ENCODE measurements at regions of chr1 and their contacts with region 1.

Region 1: DNA sequence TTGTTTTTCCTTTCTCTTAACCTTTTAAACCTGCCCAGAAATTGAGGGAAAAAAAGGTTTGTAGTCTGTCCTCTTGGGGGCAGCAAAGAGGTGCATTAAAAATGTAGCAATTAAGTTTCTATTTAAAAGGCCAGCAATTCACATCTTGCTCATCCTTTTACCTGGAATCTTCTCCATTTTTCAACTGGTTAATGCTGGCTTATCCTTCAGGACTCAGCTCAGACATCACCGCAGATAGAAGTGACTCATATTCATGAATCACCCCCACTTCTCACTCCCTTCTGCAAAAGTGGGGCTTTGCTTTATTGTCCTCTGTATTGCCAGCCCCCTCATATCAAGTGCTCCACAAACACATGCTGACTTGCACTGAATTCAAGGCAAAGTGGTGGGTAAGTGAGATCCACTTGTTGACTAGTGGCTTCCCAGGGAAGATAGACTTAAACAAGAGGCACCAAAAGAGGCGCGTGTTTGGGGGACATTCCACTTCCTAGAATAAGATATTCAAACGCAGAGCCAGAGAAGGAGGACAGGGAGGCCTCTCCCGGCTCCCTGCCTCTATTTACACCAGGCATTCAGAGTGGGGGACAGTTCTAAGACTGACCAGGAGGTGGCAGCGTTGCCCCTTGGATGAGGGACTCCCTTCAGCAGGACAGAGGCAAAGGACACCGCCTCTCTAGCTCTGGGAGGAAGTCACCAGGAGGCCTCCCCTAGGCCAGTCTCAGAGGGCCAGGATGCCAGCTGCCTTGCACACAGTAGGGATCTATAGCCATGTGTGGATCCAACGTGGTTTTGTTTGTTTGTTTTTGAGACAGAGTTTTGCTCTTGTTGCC is 23.2 kb upstream of the ZNF648 start:
- DNase-seq: peak; percentile 91
- H3K4me3 Mint-ChIP-seq: no peak overlapping the region
- H3K27ac Mint-ChIP-seq: peak overlapping the region; percentile 10
- H3K4me1 Mint-ChIP-seq: peaks cover 42% of the 10 kb centered on the region
- H3K27me3 Mint-ChIP-seq: no peaks in the 10 kb centered on the region

Region 2: GRCh38 chr1:181397845-181398244 is 686.9 kb before region 1 on chr1:
- CTCF ChIA-PET with region 1: no interaction called
- POLR2A ChIA-PET with region 1: no interaction called
- intact Hi-C with region 1: loop called (anchors 5 kb)
- DNase-seq: peak; percentile 39
- H3K4me3 Mint-ChIP-seq: no peak overlapping the region
- H3K27ac Mint-ChIP-seq: peak overlapping the region; percentile 53
- H3K4me1 Mint-ChIP-seq: peaks cover 38% of the 10 kb centered on the region
- H3K27me3 Mint-ChIP-seq: no peaks in the 10 kb centered on the region

Region 3: GRCh38 chr1:182054698-182055326 is 29.9 kb before region 1 on chr1:
- CTCF ChIA-PET with region 1: interaction called, 14 read pairs
- POLR2A ChIA-PET with region 1: no interaction called
- intact Hi-C with region 1: no loop called
- DNase-seq: peak; percentile 50
- H3K4me3 Mint-ChIP-seq: no peak overlapping the region
- H3K27ac Mint-ChIP-seq: no peak overlapping the region
- H3K4me1 Mint-ChIP-seq: peaks cover 3% of the 10 kb centered on the region
- H3K27me3 Mint-ChIP-seq: peaks cover 19% of the 10 kb centered on the region

Region 4: DNA sequence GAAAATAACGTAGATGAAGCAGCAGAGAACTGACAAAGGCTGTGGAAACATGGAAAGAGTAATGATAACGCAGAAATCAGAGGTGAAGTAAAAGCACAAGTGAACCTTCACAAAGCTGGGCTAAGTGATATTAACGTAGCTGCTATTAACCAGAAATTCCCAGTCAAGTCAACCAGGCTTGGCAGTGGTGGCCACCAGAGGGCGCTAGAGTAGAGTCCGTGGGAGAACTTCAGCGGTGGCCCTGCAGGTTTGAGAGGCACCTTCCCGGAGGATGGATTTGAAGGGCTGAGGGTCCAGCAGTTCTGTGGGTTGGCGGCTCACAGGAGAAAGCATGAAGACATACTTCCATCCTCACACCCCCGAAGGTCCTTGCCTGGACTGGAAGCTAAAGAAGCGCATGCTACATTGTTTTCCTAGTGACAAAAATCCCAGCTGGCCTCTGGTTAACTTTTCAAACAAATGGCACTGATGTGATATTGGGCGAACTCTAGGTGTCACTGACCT is 58.5 kb after region 1 on chr1:
- CTCF ChIA-PET with region 1: interaction called, 67 read pairs
- POLR2A ChIA-PET with region 1: no interaction called
- intact Hi-C with region 1: loop called (anchors 1 kb)
- DNase-seq: peak; percentile 91
- H3K4me3 Mint-ChIP-seq: no peak overlapping the region
- H3K27ac Mint-ChIP-seq: no peak overlapping the region
- H3K4me1 Mint-ChIP-seq: peaks cover 6% of the 10 kb centered on the region
- H3K27me3 Mint-ChIP-seq: peaks cover 4% of the 10 kb centered on the region

Region 5: GRCh38 chr1:182397771-182398393 is 313.2 kb after region 1 on chr1:
- CTCF ChIA-PET with region 1: interaction called, 118 read pairs
- POLR2A ChIA-PET with region 1: no interaction called
- intact Hi-C with region 1: loop called (anchors 1 kb)
- DNase-seq: no peak
- H3K4me3 Mint-ChIP-seq: no peak overlapping the region
- H3K27ac Mint-ChIP-seq: no peak overlapping the region
- H3K4me1 Mint-ChIP-seq: peaks cover 4% of the 10 kb centered on the region
- H3K27me3 Mint-ChIP-seq: no peaks in the 10 kb centered on the region

Region 6: DNA sequence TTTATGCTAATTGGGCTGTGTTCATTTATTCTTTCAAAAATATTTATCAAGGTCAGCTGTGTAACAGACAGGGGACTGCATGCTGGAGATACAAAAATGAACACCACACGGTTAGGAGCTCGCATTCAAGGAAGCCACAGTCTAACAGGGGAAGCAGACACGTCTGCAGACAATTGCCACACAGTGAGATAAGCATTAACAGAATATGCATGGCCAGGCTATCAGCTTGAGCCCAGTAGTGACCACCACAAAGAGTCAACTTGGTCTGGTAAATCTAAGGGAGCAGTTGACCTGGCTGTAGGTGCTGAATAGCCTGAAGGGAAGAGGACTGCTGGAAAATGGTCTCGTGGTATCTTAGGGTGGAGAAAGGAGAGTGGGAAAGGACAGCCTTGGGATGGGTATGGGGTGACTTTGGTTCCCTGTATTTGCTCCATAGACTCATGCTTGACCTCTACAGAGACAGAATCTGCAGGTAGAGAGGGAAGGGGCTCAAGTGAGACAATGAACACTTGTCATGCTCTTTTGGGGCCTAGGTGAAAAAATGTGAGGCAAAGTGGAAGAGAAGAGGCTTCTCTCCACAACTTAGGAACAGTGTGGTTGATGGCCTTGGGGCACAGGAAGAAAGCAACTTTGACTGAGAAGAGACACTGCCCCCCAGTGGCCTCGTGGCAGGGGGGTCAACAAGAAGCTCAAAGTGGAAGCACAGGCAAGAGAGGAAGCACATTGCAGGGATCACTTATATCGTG is 697.3 kb after region 1 on chr1:
- CTCF ChIA-PET with region 1: interaction called, 5 read pairs
- POLR2A ChIA-PET with region 1: no interaction called
- intact Hi-C with region 1: loop called (anchors 2 kb)
- DNase-seq: peak; percentile 85
- H3K4me3 Mint-ChIP-seq: no peak overlapping the region
- H3K27ac Mint-ChIP-seq: no peak overlapping the region
- H3K4me1 Mint-ChIP-seq: peaks cover 8% of the 10 kb centered on the region
- H3K27me3 Mint-ChIP-seq: no peaks in the 10 kb centered on the region